Activated T-helper 1 cell treated with anti-CD3 and anti-CD28 coated beads, Interleukin-12 subunit alpha, Interleukin-12 subunit beta, Interleukin-2, Interleukin-4 antibody, amounts not matched to agents 30 ng/mL and 10 ng/mL and 1 ng/mL, durations not matched to agents 14 hours and 24 hours and 36 hours (primary cell): ENCODE measurements at regions of chr16 and their contacts with region 1.

Region 1: GRCh38 chr16:50102051-50102746 is 36.4 kb downstream of the HEATR3 start:
- DNase-seq: no peak
- H3K4me3 Mint-ChIP-seq: no peak overlapping the region
- H3K27ac Mint-ChIP-seq: peak overlapping the region; percentile 75
- H3K4me1 Mint-ChIP-seq: peaks cover 18% of the 10 kb centered on the region
- H3K27me3 Mint-ChIP-seq: no peaks in the 10 kb centered on the region

Region 2: DNA sequence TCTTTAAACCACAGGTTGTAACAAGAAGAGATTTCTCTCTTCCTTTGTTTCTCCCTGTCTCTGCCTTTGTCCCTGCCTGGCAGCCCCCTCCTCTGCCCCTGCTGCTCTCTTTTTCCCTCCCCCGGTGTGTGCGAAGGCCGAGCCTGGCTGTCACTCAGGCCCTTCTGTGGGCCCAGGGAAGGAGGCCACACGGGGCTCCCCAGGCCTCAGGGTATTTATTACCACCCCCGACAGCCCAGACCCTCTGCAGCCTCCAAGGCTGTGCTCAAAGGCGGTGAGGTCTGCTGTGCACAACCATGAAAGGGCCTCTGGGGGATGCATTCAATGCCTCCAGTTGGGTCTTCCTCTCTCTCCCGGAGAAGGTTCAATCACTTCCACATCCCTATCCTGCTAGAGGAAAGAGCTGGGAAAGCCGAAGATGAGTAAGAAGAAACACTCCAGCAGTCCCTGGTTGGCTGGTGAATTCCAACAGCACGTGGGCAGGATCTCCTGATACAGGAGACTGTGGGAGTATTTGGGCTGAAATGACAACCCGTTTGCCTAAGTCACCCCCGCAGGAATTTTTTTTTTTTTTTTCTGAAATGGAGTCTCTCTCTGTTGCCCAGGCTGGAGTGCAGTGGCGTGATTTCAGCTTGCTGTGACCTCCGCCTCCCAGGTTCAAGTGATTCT is 280.5 kb before region 1 on chr16:
- intact Hi-C with region 1: no loop called
- DNase-seq: no peak
- H3K4me3 Mint-ChIP-seq: no peak overlapping the region
- H3K27ac Mint-ChIP-seq: no peak overlapping the region
- H3K4me1 Mint-ChIP-seq: no peaks in the 10 kb centered on the region
- H3K27me3 Mint-ChIP-seq: no peaks in the 10 kb centered on the region

Region 3: GRCh38 chr16:50121721-50122445 is 19.7 kb after region 1 on chr16:
- intact Hi-C with region 1: loop called (anchors 1 kb)
- DNase-seq: peak; percentile 63
- H3K4me3 Mint-ChIP-seq: peak overlapping the region; percentile 48
- H3K27ac Mint-ChIP-seq: peak overlapping the region; percentile 85
- H3K4me1 Mint-ChIP-seq: peaks cover 55% of the 10 kb centered on the region
- H3K27me3 Mint-ChIP-seq: no peaks in the 10 kb centered on the region

Region 4: DNA sequence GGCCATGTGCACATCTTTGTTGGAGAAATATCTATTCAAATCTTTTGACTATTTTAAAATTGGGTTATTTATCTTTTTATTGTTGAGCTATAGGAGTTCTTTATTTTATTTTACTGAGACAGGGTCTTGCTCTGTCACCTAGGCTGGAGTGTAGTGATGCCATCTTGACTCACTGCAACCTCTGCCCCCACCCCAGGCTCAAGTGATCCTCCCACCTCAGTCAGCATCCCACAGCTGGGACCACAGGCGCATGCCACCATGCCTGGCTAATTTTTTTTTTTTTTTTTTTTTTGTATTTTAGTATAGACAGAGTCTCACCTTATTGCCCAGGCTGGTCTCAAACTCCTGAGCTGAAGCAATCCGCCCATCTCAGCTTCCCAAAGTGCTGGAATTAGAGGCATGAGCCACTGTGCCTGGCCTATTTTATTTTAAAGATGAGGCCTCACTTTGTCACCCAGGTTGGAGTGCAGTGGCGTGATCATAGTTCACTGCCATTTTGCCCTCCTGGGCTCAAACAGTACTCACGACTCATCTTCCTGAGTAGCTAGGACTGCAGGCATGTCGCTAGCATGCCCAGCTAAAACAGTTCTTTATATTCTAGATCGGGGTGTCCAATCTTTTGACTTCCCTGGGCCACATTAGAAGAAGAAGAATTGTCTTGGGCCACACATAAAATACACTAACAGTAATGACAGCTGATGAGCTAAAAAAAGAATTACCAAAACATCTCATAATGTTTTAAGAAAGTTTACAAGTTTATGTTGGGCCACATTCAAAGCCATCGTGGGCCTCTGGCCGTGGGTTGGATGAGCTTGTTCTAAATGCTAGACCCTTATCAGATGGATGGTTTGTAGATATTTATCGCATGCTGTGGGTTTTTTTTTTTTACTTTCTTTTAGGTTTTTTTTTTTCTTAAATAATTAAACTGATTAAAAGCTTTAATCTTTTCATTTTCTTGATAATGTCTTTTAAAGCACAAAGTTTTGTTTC is 64.6 kb after region 1 on chr16:
- intact Hi-C with region 1: no loop called
- DNase-seq: no peak
- H3K4me3 Mint-ChIP-seq: peak overlapping the region; percentile 51
- H3K27ac Mint-ChIP-seq: peak overlapping the region; percentile 78
- H3K4me1 Mint-ChIP-seq: peaks cover 35% of the 10 kb centered on the region
- H3K27me3 Mint-ChIP-seq: no peaks in the 10 kb centered on the region